ENCODE measurements at regions of chr4 and their contacts with region 1.

Region 1: GRCh38 chr4:4488405-4489404 is 53.1 kb downstream of the STX18 start:
- DNase-seq: peak; percentile 85 to 88
- H3K4me3 ChIP-seq: no peak overlapping the region
- H3K4me1 ChIP-seq: peaks cover 83% of the 10 kb centered on the region
- H3K27me3 ChIP-seq: no peaks in the 10 kb centered on the region

Region 2: GRCh38 chr4:4859390-4859842 is 370.7 kb after region 1 on chr4 and contains the start of gene MSX1:
- in situ Hi-C with region 1: loop called (anchors 25 kb)
- DNase-seq: peak; percentile 81 to 93
- H3K4me3 ChIP-seq: peak within 1 kb of the TSS; percentile 60
- H3K4me1 ChIP-seq: peaks cover 2% of the 10 kb centered on the region; the same call in 1 of the 2 replicates
- H3K27me3 ChIP-seq: no peaks in the 10 kb centered on the region

Region 3: GRCh38 chr4:4995103-4995907 is 506.6 kb after region 1 on chr4:
- in situ Hi-C with region 1: loop called (anchors 25 kb)
- DNase-seq: peak; percentile 73 to 87
- H3K4me3 ChIP-seq: no peak overlapping the region
- H3K4me1 ChIP-seq: peaks cover 10% of the 10 kb centered on the region
- H3K27me3 ChIP-seq: no peaks in the 10 kb centered on the region

Measured in HAP-1 (cell line).